CD4-positive, alpha-beta memory T cell (primary cell): ENCODE measurements at regions of chr4 and their contacts with region 1.

Region 1: GRCh38 chr4:92885632-92886031 is 581.9 kb downstream of the GRID2 start:
- DNase-seq: no peak
- H3K4me3 ChIP-seq: no peak overlapping the region
- H3K4me3 Mint-ChIP-seq: no peak overlapping the region
- H3K27ac ChIP-seq: no peak overlapping the region
- H3K27ac Mint-ChIP-seq: no peak overlapping the region
- H3K4me1 ChIP-seq: no peaks in the 10 kb centered on the region
- H3K4me1 Mint-ChIP-seq: no peaks in the 10 kb centered on the region
- H3K27me3 ChIP-seq: no peaks in the 10 kb centered on the region
- H3K27me3 Mint-ChIP-seq: no peaks in the 10 kb centered on the region

Region 2: GRCh38 chr4:92012899-92013867 is 872.4 kb before region 1 on chr4:
- CTCF ChIA-PET with region 1: no interaction called
- POLR2A ChIA-PET with region 1: no interaction called
- intact Hi-C with region 1: no loop called
- DNase-seq: no peak
- H3K4me3 ChIP-seq: no peak overlapping the region
- H3K4me3 Mint-ChIP-seq: no peak overlapping the region
- H3K27ac ChIP-seq: no peak overlapping the region
- H3K27ac Mint-ChIP-seq: no peak overlapping the region
- H3K4me1 ChIP-seq: no peaks in the 10 kb centered on the region
- H3K4me1 Mint-ChIP-seq: no peaks in the 10 kb centered on the region
- H3K27me3 ChIP-seq: no peaks in the 10 kb centered on the region
- H3K27me3 Mint-ChIP-seq: no peaks in the 10 kb centered on the region

Region 3: DNA sequence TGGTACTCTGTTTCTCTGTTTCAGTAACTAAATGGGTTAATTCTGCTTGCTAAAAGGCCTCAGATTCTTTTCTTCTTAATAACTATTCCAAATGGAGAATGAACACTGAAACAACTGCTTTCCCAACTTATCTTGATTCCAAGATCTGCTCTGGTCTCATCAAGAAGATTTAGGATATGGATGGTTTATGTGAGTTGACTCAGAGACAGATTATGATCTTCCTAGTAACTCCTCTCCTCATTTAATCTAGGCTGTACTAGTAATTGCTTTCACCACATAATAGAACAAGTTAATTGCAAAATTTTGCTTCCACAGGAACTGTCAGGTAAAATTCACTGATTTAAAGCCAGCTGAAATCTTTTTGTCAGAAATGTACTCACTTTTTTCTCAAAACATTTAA is 44.8 kb before region 1 on chr4:
- CTCF ChIA-PET with region 1: no interaction called
- POLR2A ChIA-PET with region 1: no interaction called
- intact Hi-C with region 1: loop called (anchors 1 kb)
- DNase-seq: no peak
- H3K4me3 ChIP-seq: no peak overlapping the region
- H3K4me3 Mint-ChIP-seq: no peak overlapping the region
- H3K27ac ChIP-seq: no peak overlapping the region
- H3K27ac Mint-ChIP-seq: no peak overlapping the region
- H3K4me1 ChIP-seq: no peaks in the 10 kb centered on the region
- H3K4me1 Mint-ChIP-seq: peaks cover 0 to 4% (median 0%) of the 10 kb centered on the region in 4 donors
- H3K27me3 ChIP-seq: no peaks in the 10 kb centered on the region
- H3K27me3 Mint-ChIP-seq: no peaks in the 10 kb centered on the region